ENCODE measurements at regions of chr20 and their contacts with region 1.

Region 1: DNA sequence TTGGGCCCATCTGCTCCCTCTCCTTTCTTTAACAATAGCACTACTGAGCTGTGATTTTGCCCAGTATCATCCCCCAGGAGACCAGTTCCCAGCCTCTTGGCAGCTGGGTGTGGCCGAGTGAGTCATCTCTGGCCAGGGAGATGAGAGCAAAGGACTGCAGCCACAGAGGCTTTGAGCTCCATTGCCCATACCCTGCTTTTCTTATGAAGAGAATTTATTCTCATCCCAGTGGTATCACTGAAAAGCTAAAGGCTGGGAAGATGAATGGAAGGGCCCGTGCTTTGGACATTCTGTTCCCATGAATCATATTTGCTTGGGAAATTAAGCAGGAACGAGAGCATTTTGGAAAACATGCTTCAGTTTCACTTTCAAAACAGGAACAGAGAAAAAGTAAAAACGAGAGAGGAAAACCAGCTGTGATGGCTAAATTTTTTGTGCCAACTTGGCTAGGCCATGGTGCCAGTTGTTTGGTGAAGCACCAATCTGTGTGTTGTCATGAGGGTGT is 14.9 kb downstream of the CST3 start:
- DNase-seq: peak; percentile 94
- H3K4me3 Mint-ChIP-seq: peak overlapping the region; percentile 61
- H3K27ac Mint-ChIP-seq: peak overlapping the region; percentile 92
- H3K4me1 Mint-ChIP-seq: peaks cover 43% of the 10 kb centered on the region
- H3K27me3 Mint-ChIP-seq: no peaks in the 10 kb centered on the region
- CTCF ChIP-seq: no peak

Region 2: DNA sequence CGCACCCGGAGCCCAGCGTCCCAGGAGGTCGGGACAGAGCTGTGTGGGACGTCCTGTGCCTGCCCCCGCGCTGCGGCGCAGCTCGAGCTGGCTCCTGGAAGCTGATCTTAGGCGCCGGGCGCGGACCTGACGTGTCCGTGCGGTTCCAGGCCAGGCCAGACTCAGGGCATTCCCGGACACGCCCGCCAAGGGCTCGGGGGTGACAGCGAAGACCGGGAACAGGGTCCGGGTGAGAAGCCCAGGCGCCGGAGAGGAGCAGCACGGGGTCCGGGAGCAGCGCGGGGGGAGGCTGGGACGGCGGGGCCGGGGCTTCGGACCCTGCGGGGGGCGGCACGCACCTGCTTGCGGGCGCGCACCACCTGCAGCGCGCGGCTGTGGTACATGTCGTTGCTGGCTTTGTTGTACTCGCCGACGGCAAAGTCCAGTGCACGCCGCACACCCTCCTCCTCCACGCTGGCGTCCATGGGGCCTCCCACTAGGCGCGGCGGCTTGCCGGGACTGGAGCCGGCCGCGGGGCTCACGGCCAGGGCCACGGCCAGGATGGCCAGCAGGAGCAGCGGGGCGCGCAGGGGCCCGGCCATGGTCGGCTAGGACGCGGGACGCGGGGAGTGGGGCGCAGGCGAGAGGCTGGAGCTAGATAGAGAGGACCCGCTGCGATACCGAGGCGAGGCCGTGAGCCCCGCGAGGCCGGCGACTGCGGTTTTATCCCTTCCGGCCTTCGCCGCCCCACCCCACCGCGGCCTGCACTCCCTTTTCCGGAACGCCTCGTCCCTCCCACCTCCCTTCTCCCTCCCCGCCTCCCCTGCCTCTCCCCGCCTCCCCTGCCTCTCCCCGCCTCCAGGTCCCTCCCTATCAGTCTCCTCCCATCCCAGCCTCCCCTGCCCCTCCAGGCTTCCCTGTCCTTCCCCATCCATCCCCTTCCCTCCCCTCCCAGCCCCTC is 14.7 kb after region 1 on chr20 and contains the start of gene CST3:
- CTCF ChIA-PET with region 1: no interaction called
- POLR2A ChIA-PET with region 1: interaction called, 89 read pairs
- intact Hi-C with region 1: no loop called
- DNase-seq: peak; percentile 91
- H3K4me3 Mint-ChIP-seq: peak within 1 kb of the TSS; percentile 91
- H3K27ac Mint-ChIP-seq: peak within 1 kb of the TSS; percentile 90
- H3K4me1 Mint-ChIP-seq: peaks cover 42% of the 10 kb centered on the region
- H3K27me3 Mint-ChIP-seq: no peaks in the 10 kb centered on the region
- CTCF ChIP-seq: no peak
- total RNA-seq, gene CST3: 303 and 315 TPM in 2 replicates